Panc1 (cell line): ENCODE measurements at regions of chr7 and their contacts with region 1.

Region 1: DNA sequence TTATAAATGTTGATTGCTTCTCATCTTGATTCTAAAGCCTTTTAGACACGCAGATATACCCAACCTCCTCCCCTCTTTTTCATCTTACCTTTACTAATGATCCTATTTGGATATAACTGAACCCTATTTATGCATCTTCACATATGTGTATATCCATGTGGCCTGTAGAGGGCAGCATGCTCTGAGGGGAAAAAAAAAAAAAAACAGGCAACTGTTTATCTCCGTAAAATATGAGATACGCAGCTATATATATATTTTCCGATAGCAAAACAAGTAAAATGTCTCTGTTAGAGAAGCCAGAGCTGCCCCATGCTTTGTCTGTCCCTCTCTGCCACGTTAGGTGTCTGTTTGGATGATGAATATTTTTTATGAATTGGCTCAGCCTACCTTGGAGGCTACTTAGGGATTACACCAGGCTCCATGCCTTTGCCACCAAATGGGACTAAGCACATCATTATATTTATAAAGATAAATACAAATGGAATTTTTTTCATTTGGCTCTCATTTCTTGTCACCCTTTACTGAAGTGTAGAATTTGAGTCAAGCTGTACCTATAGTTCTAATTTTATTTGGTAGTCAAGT is 174.8 kb upstream of the FZD1 start:
- DNase-seq: peak; percentile 24
- ATAC-seq: no peak
- H3K4me3 ChIP-seq: peak overlapping the region in 1 of 2 experiments; percentile 24; a peak in 1 of 4 replicates
- H3K27ac ChIP-seq: no peak overlapping the region
- H3K4me1 ChIP-seq: no peaks in the 10 kb centered on the region
- H3K27me3 ChIP-seq: no peaks in the 10 kb centered on the region; the same call in 1 of the 2 replicates
- CTCF ChIP-seq: peak; percentile 81

Region 2: DNA sequence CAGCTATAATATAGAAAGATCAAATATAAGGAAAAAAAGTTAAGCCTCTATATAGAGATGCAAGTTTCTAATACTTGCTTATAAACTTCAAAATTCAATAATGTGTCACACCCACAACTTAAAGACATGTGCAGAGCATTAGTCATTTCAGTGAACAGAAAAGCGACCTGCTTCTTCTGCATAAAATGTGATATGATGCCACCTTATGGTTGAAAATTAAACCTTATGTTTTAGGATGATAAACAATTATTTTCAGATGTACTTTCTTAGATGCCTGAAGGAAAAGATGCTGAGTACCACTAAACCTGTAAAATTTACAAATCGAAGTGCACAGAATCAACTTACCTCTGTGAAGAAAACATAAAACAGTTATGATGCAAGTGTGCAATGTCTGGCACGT is 695.0 kb after region 1 on chr7:
- CTCF ChIA-PET with region 1: no interaction called
- POLR2A ChIA-PET with region 1: no interaction called
- in situ Hi-C with region 1: no loop called
- intact Hi-C with region 1: loop called (anchors 5 kb)
- DNase-seq: no peak
- ATAC-seq: no peak
- H3K4me3 ChIP-seq: no peak overlapping the region
- H3K27ac ChIP-seq: no peak overlapping the region
- H3K4me1 ChIP-seq: no peaks in the 10 kb centered on the region
- H3K27me3 ChIP-seq: no peaks in the 10 kb centered on the region
- CTCF ChIP-seq: peak; percentile 27; the same call in 1 of the 2 replicates

Region 3: GRCh38 chr7:91876391-91877132 is 787.1 kb after region 1 on chr7:
- CTCF ChIA-PET with region 1: no interaction called
- POLR2A ChIA-PET with region 1: no interaction called
- in situ Hi-C with region 1: no loop called
- intact Hi-C with region 1: loop called (anchors 5 kb)
- DNase-seq: no peak
- ATAC-seq: no peak
- H3K4me3 ChIP-seq: no peak overlapping the region
- H3K27ac ChIP-seq: no peak overlapping the region
- H3K4me1 ChIP-seq: peaks cover 6% of the 10 kb centered on the region; the same call in 1 of the 2 replicates
- H3K27me3 ChIP-seq: no peaks in the 10 kb centered on the region
- CTCF ChIP-seq: peak; percentile 61; the same call in 1 of the 2 replicates